Gastrocnemius medialis (tissue), 4 donors: ENCODE measurements at regions of chr12 and their contacts with region 1.

Region 1: DNA sequence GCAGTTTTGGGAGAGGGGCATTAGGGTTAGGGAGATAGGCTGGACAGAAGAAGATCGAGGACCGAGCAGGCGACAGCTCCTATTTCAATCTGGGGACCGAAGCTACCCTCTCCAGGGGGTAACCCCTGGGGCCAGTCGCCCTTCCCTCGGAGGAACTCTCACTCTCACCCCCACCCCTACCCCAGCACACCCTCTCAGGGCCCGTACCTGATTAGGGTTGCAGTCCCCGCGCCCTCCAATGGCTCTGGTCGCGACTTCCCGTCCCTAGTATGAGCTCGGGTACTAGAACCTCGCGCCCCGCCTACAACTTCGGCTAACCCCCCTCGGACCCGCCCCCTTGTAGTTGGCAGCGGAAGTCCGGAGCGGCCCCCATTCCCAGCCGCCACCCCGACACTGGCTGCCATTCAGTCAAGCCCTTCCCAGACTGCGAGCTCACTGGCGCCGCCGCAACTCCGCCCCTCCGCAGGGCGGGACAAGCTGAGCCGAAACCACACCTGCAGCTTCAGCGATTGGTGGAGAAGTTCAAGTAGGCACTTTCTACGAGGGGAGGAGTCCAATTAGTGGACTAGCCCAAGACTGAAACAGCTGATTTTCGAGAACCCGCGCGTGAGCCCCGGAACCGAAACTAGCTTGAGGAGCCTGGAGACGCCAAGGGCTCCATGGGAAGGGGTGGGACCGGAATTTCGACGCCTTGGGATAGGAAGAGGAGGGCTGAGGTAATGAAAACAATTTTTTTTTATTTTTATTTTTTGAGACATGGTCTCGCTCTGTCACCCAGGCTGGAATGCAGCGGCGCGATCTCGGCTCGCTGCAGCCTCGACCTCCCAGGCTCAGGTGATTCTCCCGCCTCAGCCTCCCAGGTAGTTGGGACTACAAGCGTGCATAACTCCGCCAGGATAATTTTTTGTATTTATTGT is at the start of gene STAT2:
- DNase-seq: peak; percentile 98
- ATAC-seq: peak; percentile 99 to 100
- H3K4me3 ChIP-seq: peak within 1 kb of the TSS; percentile 73 to 85 (median 82)
- H3K27ac ChIP-seq: peak within 1 kb of the TSS; percentile 86 to 92 (median 87)
- H3K4me1 ChIP-seq: peaks cover 8 to 12% of the 10 kb centered on the region in 2 donors
- H3K27me3 ChIP-seq: no peaks in the 10 kb centered on the region
- CTCF ChIP-seq: peak in 2 of 5 experiments; percentile 7 to 12
- POLR2A ChIP-seq: peak; percentile 63 to 69
- total RNA-seq, gene STAT2: 21.0 to 33.2 (median 27.4) TPM

Region 2: DNA sequence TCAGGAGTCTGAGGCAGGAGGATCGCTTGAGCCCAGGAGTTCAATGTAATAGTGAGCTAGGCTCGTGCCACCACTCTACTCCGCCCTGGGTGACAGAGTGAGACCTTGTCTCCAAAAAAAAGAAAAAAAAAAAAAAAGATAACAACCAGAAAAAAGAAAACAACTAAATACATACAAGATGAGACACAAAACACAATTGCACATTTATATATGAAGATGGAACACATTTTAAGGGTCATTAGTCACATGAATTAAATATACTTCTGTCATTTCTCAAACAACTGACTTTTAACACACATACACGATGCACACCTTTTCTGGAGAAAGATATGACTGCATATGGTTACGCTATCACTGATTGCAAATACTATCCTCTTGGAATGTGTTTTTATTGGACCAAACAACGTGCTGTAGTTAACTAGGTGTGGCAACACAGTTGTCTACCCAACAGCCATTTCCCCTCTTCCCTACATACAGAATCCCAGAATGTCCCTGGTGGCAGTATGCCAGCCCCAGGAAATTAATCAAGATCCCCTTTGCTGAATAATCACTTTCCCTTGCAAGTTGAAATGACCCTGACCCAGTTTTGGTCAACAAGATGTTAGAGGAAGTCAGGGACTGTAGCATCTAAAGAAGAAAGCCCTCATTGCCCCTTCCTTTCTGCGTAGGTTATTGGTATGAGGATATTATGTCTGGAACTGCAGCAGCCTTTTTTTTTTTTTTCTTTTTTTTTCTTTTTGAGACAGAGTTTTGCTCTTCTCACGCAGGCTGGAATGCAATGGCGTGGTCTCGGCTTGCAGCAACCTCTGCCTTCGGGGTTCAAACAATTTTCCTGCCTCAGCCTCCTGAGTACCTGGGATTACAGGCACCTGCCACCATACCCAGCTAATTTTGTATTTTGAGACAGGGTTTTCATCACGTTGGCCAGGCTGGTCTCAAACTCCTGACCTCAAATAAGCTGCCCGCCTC is 213.3 kb before region 1 on chr12:
- in situ Hi-C with region 1: no loop called
- intact Hi-C with region 1: no loop called
- DNase-seq: no peak
- ATAC-seq: no peak
- H3K4me3 ChIP-seq: no peak overlapping the region
- H3K27ac ChIP-seq: peak overlapping the region; percentile 43 to 61 (median 46)
- H3K4me1 ChIP-seq: peaks cover 13 to 22% of the 10 kb centered on the region in 2 donors
- H3K27me3 ChIP-seq: no peaks in the 10 kb centered on the region
- CTCF ChIP-seq: no peak
- POLR2A ChIP-seq: no peak

Region 3: DNA sequence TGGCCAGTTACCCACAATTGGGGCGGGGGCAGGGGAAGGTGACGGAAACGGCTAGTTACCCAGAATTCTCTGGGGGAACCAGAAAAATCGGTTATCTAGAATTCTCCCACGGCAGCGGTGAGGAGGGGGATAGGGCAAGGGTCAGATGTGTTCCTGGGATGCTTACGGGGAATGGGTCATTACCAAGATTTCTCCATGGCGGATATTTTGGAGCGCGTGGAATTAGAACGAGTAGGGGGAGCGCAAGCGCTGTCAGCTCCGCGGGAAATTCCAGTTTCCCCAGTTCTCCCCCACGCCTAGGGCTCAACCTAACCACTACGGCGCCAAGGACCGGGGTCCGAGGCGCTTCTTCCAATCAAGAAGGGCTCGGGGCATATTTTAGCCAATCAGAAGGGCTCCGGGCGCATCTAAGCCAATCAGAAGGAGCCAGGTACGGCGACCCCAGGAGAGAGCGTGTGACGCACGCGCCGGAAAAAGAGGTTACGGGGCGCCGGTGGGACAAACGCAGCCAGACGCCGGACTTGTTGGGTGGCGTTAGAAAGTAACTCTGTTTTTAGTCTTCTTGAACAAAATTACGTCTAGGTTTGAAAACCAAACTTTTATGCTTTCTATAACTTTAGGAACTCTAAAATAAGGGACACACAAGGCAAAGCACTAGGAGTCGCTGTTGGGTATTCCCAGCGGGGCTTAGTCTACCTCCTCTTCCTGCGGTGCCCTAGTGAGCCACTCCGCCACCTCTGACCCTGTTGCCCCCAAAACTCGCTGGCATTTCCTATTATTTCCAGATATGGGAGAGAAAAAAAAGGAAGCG is 26.2 kb before region 1 on chr12 and contains the start of gene PAN2:
- in situ Hi-C with region 1: no loop called
- intact Hi-C with region 1: loop called (anchors 1 kb)
- DNase-seq: peak; percentile 95 to 97
- ATAC-seq: peak; percentile 98 to 99
- H3K4me3 ChIP-seq: peak within 1 kb of the TSS; percentile 53 to 81 (median 78)
- H3K27ac ChIP-seq: peak within 1 kb of the TSS; percentile 76 to 95 (median 92)
- H3K4me1 ChIP-seq: peaks cover 9 to 14% of the 10 kb centered on the region in 2 donors
- H3K27me3 ChIP-seq: no peaks in the 10 kb centered on the region
- CTCF ChIP-seq: peak; percentile 30 to 46 (median 43)
- POLR2A ChIP-seq: peak; percentile 88 to 89
- total RNA-seq, gene PAN2: 7.8 to 33.0 (median 11.6) TPM

Region 4: DNA sequence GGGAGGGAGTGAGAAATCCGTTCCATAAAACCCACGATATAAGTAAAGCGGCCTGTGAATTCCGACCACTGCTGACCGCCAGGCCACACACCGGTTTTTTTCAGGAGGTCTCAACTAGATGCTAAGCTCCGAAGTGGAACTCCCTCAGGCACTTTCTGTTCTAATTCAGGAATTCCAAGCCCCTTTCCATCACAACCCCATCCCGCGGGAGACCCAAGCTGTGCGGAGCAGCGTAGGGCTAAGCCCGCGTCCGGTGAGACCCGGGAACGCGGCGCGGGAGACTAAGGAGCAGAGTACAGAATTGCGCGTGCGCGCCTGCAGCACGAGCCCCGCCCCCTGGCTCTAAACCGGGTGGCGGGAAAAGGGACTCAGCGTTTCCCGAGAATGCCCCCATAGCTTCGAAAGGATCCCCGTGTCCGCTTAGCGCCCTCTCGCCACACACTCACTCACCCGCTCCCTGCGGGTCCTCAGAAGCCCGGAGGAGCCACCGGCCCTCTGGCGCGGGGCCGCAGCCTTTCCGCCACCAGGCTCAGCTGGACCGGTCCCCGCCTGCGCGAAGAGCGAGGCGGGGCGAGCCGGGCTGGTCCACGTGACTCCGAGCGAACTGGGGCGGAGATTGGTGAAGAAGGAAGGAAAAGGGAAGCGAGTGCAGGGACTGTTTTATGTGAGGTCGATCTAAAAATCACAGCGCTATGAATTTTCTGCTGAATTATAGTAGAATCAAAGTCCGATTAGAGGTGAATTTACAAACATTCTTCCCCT is 88.9 kb after region 1 on chr12 and contains the start of gene TIMELESS:
- in situ Hi-C with region 1: no loop called
- intact Hi-C with region 1: loop called (anchors 1 kb)
- DNase-seq: peak; percentile 77 to 85
- ATAC-seq: peak; percentile 98 to 99
- H3K4me3 ChIP-seq: peak within 1 kb of the TSS; percentile 75 to 83 (median 82)
- H3K27ac ChIP-seq: peak within 1 kb of the TSS; percentile 84 to 92 (median 88)
- H3K4me1 ChIP-seq: peaks cover 6 to 8% of the 10 kb centered on the region in 2 donors
- H3K27me3 ChIP-seq: no peaks in the 10 kb centered on the region
- CTCF ChIP-seq: peak in 2 of 5 experiments; percentile 15 to 25
- POLR2A ChIP-seq: peak; percentile 47 to 57
- total RNA-seq, gene TIMELESS: 1.9 to 4.6 (median 2.5) TPM